ENCODE measurements at regions of chr10 and their contacts with region 1.

Region 1: GRCh38 chr10:91251430-91252056 is 31.1 kb downstream of the PCGF5 start:
- DNase-seq: peak; percentile 18 to 79 (median 51)
- ATAC-seq: peak; percentile 89
- H3K4me3 ChIP-seq: no peak overlapping the region
- H3K4me3 Mint-ChIP-seq: no peak overlapping the region
- H3K27ac ChIP-seq: no peak overlapping the region
- H3K27ac Mint-ChIP-seq: no peak overlapping the region
- H3K4me1 ChIP-seq: peaks cover 15% of the 10 kb centered on the region
- H3K4me1 Mint-ChIP-seq: peaks cover 9% of the 10 kb centered on the region
- H3K27me3 ChIP-seq: no peaks in the 10 kb centered on the region
- H3K27me3 Mint-ChIP-seq: no peaks in the 10 kb centered on the region
- CTCF ChIP-seq: peak; percentile 99

Region 2: DNA sequence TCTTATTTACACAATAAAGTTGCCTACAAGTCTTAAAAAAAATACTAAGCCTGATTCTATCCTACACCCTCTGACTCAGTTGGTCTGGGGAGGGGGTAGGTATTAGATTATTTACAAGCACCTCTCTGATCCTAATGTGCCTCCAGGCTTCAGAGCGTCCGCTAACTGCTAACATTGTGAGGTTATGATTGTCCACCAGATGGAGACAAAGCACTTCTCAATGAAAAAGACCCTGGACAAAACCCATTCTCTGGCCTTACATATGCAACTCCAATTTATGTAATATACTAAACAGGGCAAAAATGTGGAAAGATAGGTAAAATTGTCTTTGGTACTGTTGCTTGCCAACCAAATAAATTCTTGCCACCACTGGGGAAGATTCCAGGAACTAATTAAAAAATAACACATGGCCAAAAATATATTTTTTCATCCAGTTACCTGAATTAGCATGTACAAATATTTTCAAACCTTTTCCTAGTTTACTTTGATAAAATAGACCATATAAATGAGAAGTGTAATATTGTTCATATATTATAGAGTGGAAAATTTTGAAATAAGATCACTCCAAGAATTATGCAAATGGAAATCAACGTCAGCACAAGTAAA is 1457.8 kb before region 1 on chr10:
- CTCF ChIA-PET with region 1: no interaction called
- POLR2A ChIA-PET with region 1: no interaction called
- intact Hi-C with region 1: loop called in 1 of 2 experiments (anchors 5 kb)
- DNase-seq: peak in 5 of 9 experiments; percentile 14 to 74 (median 27)
- ATAC-seq: peak; percentile 61
- H3K4me3 ChIP-seq: no peak overlapping the region
- H3K4me3 Mint-ChIP-seq: no peak overlapping the region
- H3K27ac ChIP-seq: no peak overlapping the region
- H3K27ac Mint-ChIP-seq: no peak overlapping the region
- H3K4me1 ChIP-seq: no peaks in the 10 kb centered on the region
- H3K4me1 Mint-ChIP-seq: no peaks in the 10 kb centered on the region
- H3K27me3 ChIP-seq: no peaks in the 10 kb centered on the region
- H3K27me3 Mint-ChIP-seq: peaks cover 14% of the 10 kb centered on the region
- CTCF ChIP-seq: peak; percentile 78

Region 3: DNA sequence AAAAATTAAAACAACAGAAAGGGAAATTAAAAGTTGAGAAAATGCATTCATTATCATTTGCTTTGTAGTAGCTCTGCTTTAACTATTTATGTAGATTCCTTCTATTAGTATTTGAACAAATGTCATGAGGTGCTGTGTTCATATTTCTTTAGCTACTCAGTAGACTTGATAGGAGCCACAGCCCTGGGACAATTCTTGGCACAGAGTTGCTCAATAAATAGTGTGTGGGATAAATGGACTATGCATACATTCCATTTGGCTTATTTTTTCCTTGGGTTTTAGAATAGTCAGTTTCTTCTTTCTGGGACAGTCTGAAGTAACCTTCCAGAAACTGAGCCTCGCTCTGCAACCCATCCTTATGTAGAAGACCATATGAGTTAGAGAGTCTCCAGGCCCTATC is 366.4 kb before region 1 on chr10:
- CTCF ChIA-PET with region 1: interaction called, 3 read pairs
- POLR2A ChIA-PET with region 1: no interaction called
- intact Hi-C with region 1: loop called (anchors 1 to 2 kb)
- DNase-seq: no peak
- ATAC-seq: no peak
- H3K4me3 ChIP-seq: no peak overlapping the region
- H3K4me3 Mint-ChIP-seq: no peak overlapping the region
- H3K27ac ChIP-seq: no peak overlapping the region
- H3K27ac Mint-ChIP-seq: no peak overlapping the region
- H3K4me1 ChIP-seq: no peaks in the 10 kb centered on the region
- H3K4me1 Mint-ChIP-seq: no peaks in the 10 kb centered on the region
- H3K27me3 ChIP-seq: no peaks in the 10 kb centered on the region
- H3K27me3 Mint-ChIP-seq: no peaks in the 10 kb centered on the region
- CTCF ChIP-seq: no peak

Region 4: GRCh38 chr10:91043173-91043910 is 208.2 kb before region 1 on chr10:
- CTCF ChIA-PET with region 1: interaction called, 6 read pairs
- POLR2A ChIA-PET with region 1: no interaction called
- intact Hi-C with region 1: loop called in 1 of 2 experiments (anchors 1 kb)
- DNase-seq: peak in 1 of 9 experiments; percentile 17
- ATAC-seq: no peak
- H3K4me3 ChIP-seq: no peak overlapping the region
- H3K4me3 Mint-ChIP-seq: no peak overlapping the region
- H3K27ac ChIP-seq: no peak overlapping the region
- H3K27ac Mint-ChIP-seq: no peak overlapping the region
- H3K4me1 ChIP-seq: no peaks in the 10 kb centered on the region
- H3K4me1 Mint-ChIP-seq: no peaks in the 10 kb centered on the region
- H3K27me3 ChIP-seq: no peaks in the 10 kb centered on the region
- H3K27me3 Mint-ChIP-seq: peaks cover 2% of the 10 kb centered on the region
- CTCF ChIP-seq: no peak

Region 5: DNA sequence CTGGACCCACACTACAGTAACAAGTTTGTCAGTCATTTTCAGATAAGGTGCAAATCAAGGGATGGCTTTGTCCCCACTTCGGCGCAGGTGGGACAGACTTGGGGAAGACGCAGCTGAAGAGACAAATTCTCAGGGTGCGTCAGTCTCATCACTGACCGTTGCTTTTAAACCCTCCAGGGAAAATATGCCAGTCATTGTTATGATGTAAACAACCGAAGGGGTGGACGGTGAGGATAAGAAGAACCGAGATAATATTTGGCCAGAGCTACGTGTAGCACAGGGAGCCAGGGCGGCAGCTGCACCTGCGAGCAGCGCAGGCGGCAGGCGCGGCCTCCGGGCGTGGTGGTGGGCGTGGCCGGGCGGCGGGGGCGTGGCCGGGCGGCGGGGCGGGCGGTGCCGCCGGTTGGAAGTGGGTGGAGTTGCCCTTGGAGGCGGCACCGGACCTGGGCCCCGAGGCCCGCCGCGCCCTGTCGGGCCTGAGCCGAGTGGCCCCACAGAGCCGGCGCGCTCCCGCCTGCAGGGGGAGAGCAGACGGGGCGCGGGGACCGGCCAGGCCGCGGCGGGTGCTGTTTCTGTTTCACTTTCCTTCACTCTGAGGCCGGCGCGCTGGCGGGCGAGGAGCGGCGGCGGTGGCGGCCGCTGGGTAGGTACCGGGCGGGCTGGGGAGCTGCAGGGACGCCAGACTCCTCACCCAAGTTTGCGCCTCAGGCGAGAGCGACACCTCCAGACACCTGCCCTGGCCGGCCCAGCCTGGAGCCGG is 31.2 kb before region 1 on chr10 and contains the start of gene PCGF5:
- CTCF ChIA-PET with region 1: interaction called, 7 read pairs
- POLR2A ChIA-PET with region 1: no interaction called
- intact Hi-C with region 1: loop called in 1 of 2 experiments (anchors 2 kb)
- DNase-seq: peak; percentile 87 to 97 (median 91)
- ATAC-seq: peak; percentile 94
- H3K4me3 ChIP-seq: peak within 1 kb of the TSS; percentile 66 to 80
- H3K4me3 Mint-ChIP-seq: peak within 1 kb of the TSS; percentile 89
- H3K27ac ChIP-seq: peak within 1 kb of the TSS; percentile 74 to 76
- H3K27ac Mint-ChIP-seq: peak within 1 kb of the TSS; percentile 91
- H3K4me1 ChIP-seq: peaks cover 32% of the 10 kb centered on the region
- H3K4me1 Mint-ChIP-seq: peaks cover 51% of the 10 kb centered on the region
- H3K27me3 ChIP-seq: no peaks in the 10 kb centered on the region
- H3K27me3 Mint-ChIP-seq: no peaks in the 10 kb centered on the region
- CTCF ChIP-seq: no peak
- total RNA-seq, gene PCGF5: 67.5 to 70.7 TPM

Region 6: DNA sequence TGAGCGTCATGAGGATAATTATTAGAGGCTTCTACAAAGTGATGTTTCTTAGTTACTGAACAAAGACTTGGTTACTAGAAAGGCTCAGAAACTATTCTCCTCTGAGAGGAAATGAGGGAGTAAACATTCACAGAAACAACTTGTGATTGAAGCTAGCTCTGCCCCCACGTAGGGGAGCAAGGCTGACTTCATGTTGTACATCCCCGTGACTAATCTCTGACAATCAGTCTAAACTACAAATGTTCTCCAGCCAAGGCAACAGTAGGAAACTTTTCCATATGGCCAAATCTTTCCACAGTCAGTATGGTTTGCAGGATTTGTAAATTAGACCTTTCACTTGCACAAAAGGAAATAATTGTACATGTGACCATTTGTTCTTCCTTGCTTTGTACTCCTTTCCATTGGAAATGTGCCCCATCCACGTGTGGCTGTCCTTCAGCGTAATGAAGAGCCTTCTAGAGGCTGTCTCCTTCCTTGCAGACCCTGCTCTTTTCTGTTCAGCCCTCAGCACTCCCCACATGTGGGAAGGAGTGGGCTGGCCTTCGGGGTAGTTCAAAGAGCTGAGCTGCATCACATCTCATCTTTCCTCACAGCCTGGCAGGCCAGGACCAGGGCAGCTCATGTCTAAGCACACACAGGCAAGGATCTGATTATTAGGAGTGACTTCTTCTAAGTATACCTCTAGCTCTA is 62.4 kb after region 1 on chr10:
- CTCF ChIA-PET with region 1: no interaction called
- POLR2A ChIA-PET with region 1: no interaction called
- intact Hi-C with region 1: no loop called
- DNase-seq: no peak
- ATAC-seq: no peak
- H3K4me3 ChIP-seq: no peak overlapping the region
- H3K4me3 Mint-ChIP-seq: no peak overlapping the region
- H3K27ac ChIP-seq: no peak overlapping the region
- H3K27ac Mint-ChIP-seq: no peak overlapping the region
- H3K4me1 ChIP-seq: no peaks in the 10 kb centered on the region
- H3K4me1 Mint-ChIP-seq: no peaks in the 10 kb centered on the region
- H3K27me3 ChIP-seq: no peaks in the 10 kb centered on the region
- H3K27me3 Mint-ChIP-seq: peaks cover 9% of the 10 kb centered on the region
- CTCF ChIP-seq: no peak